ENCODE measurements at regions of chr18 and their contacts with region 1.

Region 1: DNA sequence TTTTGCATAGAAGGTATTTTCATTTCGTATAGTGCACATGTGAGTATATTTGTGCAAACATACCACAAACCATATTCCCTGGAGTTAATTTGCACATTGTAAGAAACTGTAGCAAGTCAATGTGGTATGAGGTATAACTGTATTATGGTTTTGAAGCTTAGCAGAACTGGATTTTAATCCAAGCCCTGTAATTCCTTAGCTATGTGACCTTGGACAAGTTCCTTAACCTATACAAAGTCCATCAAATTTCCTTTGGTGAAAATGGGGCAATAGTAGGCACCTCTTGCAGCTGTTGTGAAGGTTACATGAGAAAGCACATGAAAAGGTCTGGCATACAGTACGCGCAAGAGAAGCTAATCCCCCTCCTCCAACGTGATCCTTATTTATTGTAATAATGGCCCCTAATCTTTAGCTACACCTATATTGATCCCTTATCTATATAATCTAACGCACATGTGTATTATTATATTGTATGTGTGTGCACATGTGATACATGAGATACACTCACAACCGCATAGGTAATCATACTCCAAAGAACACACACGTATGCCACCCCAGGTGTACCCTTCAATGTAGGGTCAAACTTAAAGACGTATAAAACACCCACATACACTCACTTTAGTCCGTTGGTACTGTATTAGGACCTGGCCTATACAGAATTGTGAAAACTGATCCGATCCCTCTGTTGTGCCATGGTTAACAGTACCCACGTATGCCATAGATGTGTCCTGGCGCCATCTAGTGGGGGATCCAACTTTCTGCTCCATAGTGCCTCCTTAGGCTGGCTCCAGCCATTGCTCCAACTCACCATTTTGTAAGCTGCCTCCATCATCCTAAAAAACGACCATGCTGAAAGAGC is 402.9 kb upstream of the SLC14A2 start:
- DNase-seq: peak; percentile 90
- ATAC-seq: peak; percentile 99
- H3K4me3 ChIP-seq: no peak overlapping the region
- H3K4me3 Mint-ChIP-seq: no peak overlapping the region
- H3K27ac ChIP-seq: no peak overlapping the region
- H3K27ac Mint-ChIP-seq: no peak overlapping the region
- H3K4me1 ChIP-seq: peaks cover 0 to 6% of the 10 kb centered on the region in 2 donors
- H3K4me1 Mint-ChIP-seq: peaks cover 7% of the 10 kb centered on the region
- H3K27me3 ChIP-seq: no peaks in the 10 kb centered on the region
- H3K27me3 Mint-ChIP-seq: no peaks in the 10 kb centered on the region
- CTCF ChIP-seq: peak; percentile 100

Region 2: GRCh38 chr18:44098551-44099098 is 1113.8 kb before region 1 on chr18:
- CTCF ChIA-PET with region 1: interaction called, 4 read pairs
- POLR2A ChIA-PET with region 1: no interaction called
- intact Hi-C with region 1: loop called (anchors 1 kb)
- DNase-seq: peak; percentile 16
- ATAC-seq: no peak
- H3K4me3 ChIP-seq: no peak overlapping the region
- H3K4me3 Mint-ChIP-seq: no peak overlapping the region
- H3K27ac ChIP-seq: no peak overlapping the region
- H3K27ac Mint-ChIP-seq: no peak overlapping the region
- H3K4me1 ChIP-seq: no peaks in the 10 kb centered on the region
- H3K4me1 Mint-ChIP-seq: no peaks in the 10 kb centered on the region
- H3K27me3 ChIP-seq: no peaks in the 10 kb centered on the region
- H3K27me3 Mint-ChIP-seq: peaks cover 17% of the 10 kb centered on the region
- CTCF ChIP-seq: no peak

Region 3: GRCh38 chr18:44579028-44579702 is 633.2 kb before region 1 on chr18:
- CTCF ChIA-PET with region 1: interaction called, 15 read pairs
- POLR2A ChIA-PET with region 1: no interaction called
- intact Hi-C with region 1: loop called (anchors 1 kb)
- DNase-seq: peak; percentile 33
- ATAC-seq: no peak
- H3K4me3 ChIP-seq: no peak overlapping the region
- H3K4me3 Mint-ChIP-seq: no peak overlapping the region
- H3K27ac ChIP-seq: no peak overlapping the region
- H3K27ac Mint-ChIP-seq: no peak overlapping the region
- H3K4me1 ChIP-seq: peaks cover 3 to 4% of the 10 kb centered on the region in 2 donors
- H3K4me1 Mint-ChIP-seq: peaks cover 20% of the 10 kb centered on the region
- H3K27me3 ChIP-seq: no peaks in the 10 kb centered on the region
- H3K27me3 Mint-ChIP-seq: no peaks in the 10 kb centered on the region
- CTCF ChIP-seq: peak; percentile 79

Region 4: GRCh38 chr18:44725300-44726096 is 486.9 kb before region 1 on chr18:
- CTCF ChIA-PET with region 1: interaction called, 18 read pairs
- POLR2A ChIA-PET with region 1: no interaction called
- intact Hi-C with region 1: loop called (anchors 2 kb)
- DNase-seq: peak; percentile 68
- ATAC-seq: peak; percentile 50
- H3K4me3 ChIP-seq: peak overlapping the region in 3 of 5 experiments; percentile 3 to 23 (median 7)
- H3K4me3 Mint-ChIP-seq: peak overlapping the region; percentile 70
- H3K27ac ChIP-seq: peak overlapping the region; percentile 80 to 85
- H3K27ac Mint-ChIP-seq: peak overlapping the region; percentile 88
- H3K4me1 ChIP-seq: peaks cover 99 to 100% of the 10 kb centered on the region in 2 donors
- H3K4me1 Mint-ChIP-seq: peaks cover 98% of the 10 kb centered on the region
- H3K27me3 ChIP-seq: no peaks in the 10 kb centered on the region
- H3K27me3 Mint-ChIP-seq: no peaks in the 10 kb centered on the region
- CTCF ChIP-seq: no peak

Region 5: DNA sequence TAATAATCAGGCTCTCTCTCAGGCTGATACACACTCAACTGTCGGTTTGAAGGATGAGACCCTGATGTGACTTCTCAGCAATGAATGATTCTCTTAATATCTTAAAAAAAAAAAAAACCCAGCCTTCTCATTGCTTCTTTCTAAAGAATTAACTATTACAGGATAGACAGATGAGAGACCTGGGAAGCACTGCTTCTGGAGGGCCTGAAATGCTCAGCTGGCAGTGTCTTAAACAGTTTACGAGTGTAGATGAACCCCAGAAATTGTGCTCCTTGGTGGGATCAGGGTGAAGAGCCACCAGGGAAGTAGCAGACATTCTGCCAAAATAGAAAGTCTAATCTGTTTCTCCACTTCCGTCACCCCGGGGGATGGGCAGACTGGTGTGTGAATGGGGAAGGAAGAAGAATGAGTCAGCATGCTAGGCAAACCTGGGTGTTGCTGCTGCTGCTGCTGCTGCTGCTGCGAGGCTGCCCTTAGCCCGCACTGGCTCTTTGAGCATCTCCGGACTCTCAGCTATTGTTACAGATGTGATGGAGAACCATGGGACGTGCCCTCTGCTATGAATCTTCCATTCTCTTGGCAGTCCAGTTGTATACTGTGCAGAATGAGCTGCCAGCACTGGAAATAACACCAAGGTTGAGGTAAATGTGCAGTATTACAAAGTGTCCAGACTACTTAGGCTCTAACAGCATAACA is 373.3 kb before region 1 on chr18:
- CTCF ChIA-PET with region 1: interaction called, 4 read pairs
- POLR2A ChIA-PET with region 1: no interaction called
- intact Hi-C with region 1: loop called (anchors 5 kb)
- DNase-seq: peak; percentile 71
- ATAC-seq: peak; percentile 94
- H3K4me3 ChIP-seq: peak overlapping the region in 1 of 5 experiments; percentile 22
- H3K4me3 Mint-ChIP-seq: peak overlapping the region; percentile 65
- H3K27ac ChIP-seq: no peak overlapping the region
- H3K27ac Mint-ChIP-seq: peak overlapping the region; percentile 75
- H3K4me1 ChIP-seq: peaks cover 38 to 56% of the 10 kb centered on the region in 2 donors
- H3K4me1 Mint-ChIP-seq: peaks cover 82% of the 10 kb centered on the region
- H3K27me3 ChIP-seq: no peaks in the 10 kb centered on the region
- H3K27me3 Mint-ChIP-seq: no peaks in the 10 kb centered on the region
- CTCF ChIP-seq: no peak

Region 6: GRCh38 chr18:44996261-44996660 is 216.1 kb before region 1 on chr18:
- CTCF ChIA-PET with region 1: interaction called, 3 read pairs
- POLR2A ChIA-PET with region 1: no interaction called
- intact Hi-C with region 1: loop called (anchors 10 kb)
- DNase-seq: peak; percentile 45
- ATAC-seq: peak; percentile 58
- H3K4me3 ChIP-seq: no peak overlapping the region
- H3K4me3 Mint-ChIP-seq: no peak overlapping the region
- H3K27ac ChIP-seq: peak overlapping the region in 1 of 2 donors; percentile 21
- H3K27ac Mint-ChIP-seq: peak overlapping the region; percentile 55
- H3K4me1 ChIP-seq: peaks cover 11 to 12% of the 10 kb centered on the region in 2 donors
- H3K4me1 Mint-ChIP-seq: peaks cover 20% of the 10 kb centered on the region
- H3K27me3 ChIP-seq: no peaks in the 10 kb centered on the region
- H3K27me3 Mint-ChIP-seq: no peaks in the 10 kb centered on the region
- CTCF ChIP-seq: no peak

Region 7: DNA sequence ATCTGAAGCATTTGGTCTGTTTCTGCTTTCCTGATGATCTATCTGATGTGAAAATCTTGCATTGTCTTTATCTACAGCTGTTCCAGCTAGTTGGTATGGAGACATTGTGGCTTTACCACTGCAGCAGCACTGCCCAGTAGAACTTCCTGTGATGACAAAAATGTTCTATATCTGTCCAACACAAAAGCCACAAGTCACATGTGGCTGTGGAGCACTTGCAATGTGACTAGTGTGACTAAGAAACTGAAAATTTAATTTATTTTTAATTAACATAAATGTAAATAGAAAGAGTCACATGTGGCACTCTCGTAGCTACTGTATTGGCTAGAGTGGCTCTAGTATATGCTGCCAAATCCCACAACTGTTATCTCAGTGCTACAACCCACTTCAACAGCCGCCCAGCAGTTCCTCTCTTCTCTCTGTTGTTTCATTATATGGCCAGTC is 106.1 kb before region 1 on chr18:
- CTCF ChIA-PET with region 1: interaction called, 16 read pairs
- POLR2A ChIA-PET with region 1: no interaction called
- intact Hi-C with region 1: loop called (anchors 2 kb)
- DNase-seq: peak; percentile 80
- ATAC-seq: peak; percentile 56
- H3K4me3 ChIP-seq: peak overlapping the region in 2 of 5 experiments; percentile 8 to 30
- H3K4me3 Mint-ChIP-seq: peak overlapping the region; percentile 59
- H3K27ac ChIP-seq: peak overlapping the region; percentile 89 to 93
- H3K27ac Mint-ChIP-seq: peak overlapping the region; percentile 83
- H3K4me1 ChIP-seq: peaks cover 67 to 68% of the 10 kb centered on the region in 2 donors
- H3K4me1 Mint-ChIP-seq: peaks cover 53% of the 10 kb centered on the region
- H3K27me3 ChIP-seq: no peaks in the 10 kb centered on the region
- H3K27me3 Mint-ChIP-seq: no peaks in the 10 kb centered on the region
- CTCF ChIP-seq: no peak